Activated CD8-positive, alpha-beta T cell treated with anti-CD3 and anti-CD28 coated beads, Interleukin-2, amount 10 ng/mL, durations not matched to agents 7 days and 5 days (primary cell): ENCODE measurements at regions of chr11 and their contacts with region 1.

Region 1: GRCh38 chr11:115334932-115335788 is 169.1 kb downstream of the CADM1 start:
- DNase-seq: no peak
- ATAC-seq: no peak
- H3K4me3 Mint-ChIP-seq: no peak overlapping the region
- H3K27ac Mint-ChIP-seq: no peak overlapping the region
- H3K4me1 Mint-ChIP-seq: no peaks in the 10 kb centered on the region
- H3K27me3 Mint-ChIP-seq: no peaks in the 10 kb centered on the region

Region 2: DNA sequence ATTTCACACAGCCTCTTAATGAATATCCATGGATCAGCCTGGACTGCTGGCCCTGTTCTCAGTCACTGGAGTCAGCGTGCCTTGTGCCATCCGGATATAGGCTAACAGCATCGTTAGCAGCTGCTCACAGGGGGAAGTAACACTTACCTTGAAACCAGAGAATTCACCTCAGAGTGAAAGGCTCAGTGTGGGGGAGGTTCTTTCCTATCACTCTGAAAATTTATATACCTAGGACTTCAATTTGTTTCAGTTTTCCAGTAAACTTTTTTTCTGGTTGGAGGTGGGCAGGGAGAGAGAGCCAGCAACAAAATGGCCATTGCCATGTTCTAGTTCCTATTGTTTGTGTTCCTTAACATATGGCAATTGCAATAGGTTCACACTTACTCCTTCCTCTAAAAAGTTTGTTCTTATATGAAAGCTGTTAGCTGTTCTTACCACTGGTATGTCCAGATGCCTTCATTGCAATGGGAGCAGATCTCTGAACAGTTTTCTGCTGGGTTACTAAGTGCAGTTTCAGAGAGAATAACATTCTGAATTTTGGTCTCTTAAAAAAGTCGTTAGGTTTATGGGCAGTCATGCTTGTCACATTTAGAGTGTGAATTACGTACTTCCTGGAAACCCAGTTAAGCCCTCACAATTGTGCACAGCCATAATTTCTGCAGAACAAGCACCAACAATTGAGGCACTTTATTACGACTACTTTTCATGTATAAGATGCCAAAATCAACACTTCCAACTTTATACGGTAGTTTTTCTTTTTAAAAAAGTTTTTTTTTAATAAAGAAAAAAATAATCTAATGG is 78.6 kb before region 1 on chr11:
- CTCF ChIA-PET with region 1: no interaction called
- POLR2A ChIA-PET with region 1: no interaction called
- DNase-seq: no peak
- ATAC-seq: no peak
- H3K4me3 Mint-ChIP-seq: no peak overlapping the region
- H3K27ac Mint-ChIP-seq: peak overlapping the region; percentile 61
- H3K4me1 Mint-ChIP-seq: no peaks in the 10 kb centered on the region
- H3K27me3 Mint-ChIP-seq: no peaks in the 10 kb centered on the region

Region 3: DNA sequence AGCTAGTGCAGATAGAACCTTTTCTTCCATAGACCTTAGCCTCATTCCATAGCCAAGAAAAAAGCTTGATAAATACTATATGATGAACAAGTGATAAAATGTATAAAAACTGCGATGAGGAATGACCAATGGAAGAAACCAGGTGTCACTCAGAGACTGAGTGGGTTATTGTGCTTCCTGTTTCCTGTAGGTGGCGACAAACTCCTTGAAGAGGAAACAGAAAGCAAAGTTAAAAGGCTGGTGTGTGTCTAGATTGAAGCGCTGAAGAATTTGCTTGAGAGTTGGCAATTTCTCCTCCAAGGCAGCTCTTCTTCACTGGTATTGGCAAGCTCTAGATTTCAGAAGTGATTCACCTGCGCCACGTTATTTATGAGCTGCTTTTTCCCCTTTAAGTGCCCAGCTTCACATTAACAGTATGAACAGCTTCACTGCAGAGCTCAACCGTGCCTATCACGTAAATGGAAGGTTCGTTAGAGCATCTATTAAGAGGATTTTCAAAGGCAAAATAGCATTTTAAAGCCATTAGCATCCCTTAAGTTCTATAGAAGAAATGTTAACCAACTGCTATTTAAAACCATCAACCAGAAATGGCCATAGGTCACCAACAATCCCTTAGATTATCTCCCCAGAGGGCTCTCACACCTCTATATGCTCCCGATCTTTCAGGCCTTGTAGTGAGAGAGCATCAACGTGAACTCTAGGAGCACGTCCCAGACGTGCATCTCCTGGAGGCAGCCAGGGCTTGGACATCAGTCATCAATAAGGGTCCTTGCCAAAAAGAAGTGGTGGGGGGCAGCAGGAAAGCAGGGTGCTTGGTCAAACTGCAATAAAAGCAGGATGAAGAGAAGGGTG is 10.4 kb before region 1 on chr11:
- CTCF ChIA-PET with region 1: interaction called, 19 read pairs
- POLR2A ChIA-PET with region 1: no interaction called
- DNase-seq: peak; percentile 40
- ATAC-seq: peak; percentile 55
- H3K4me3 Mint-ChIP-seq: no peak overlapping the region
- H3K27ac Mint-ChIP-seq: no peak overlapping the region
- H3K4me1 Mint-ChIP-seq: no peaks in the 10 kb centered on the region
- H3K27me3 Mint-ChIP-seq: peaks cover 4% of the 10 kb centered on the region